Cardiac septum (tissue), 1 donor: ENCODE measurements at regions of chr11 and their contacts with region 1.

Region 1: GRCh38 chr11:8768625-8769333 is 86.2 kb downstream of the RPL27A start:
- DNase-seq: no peak

Region 2: DNA sequence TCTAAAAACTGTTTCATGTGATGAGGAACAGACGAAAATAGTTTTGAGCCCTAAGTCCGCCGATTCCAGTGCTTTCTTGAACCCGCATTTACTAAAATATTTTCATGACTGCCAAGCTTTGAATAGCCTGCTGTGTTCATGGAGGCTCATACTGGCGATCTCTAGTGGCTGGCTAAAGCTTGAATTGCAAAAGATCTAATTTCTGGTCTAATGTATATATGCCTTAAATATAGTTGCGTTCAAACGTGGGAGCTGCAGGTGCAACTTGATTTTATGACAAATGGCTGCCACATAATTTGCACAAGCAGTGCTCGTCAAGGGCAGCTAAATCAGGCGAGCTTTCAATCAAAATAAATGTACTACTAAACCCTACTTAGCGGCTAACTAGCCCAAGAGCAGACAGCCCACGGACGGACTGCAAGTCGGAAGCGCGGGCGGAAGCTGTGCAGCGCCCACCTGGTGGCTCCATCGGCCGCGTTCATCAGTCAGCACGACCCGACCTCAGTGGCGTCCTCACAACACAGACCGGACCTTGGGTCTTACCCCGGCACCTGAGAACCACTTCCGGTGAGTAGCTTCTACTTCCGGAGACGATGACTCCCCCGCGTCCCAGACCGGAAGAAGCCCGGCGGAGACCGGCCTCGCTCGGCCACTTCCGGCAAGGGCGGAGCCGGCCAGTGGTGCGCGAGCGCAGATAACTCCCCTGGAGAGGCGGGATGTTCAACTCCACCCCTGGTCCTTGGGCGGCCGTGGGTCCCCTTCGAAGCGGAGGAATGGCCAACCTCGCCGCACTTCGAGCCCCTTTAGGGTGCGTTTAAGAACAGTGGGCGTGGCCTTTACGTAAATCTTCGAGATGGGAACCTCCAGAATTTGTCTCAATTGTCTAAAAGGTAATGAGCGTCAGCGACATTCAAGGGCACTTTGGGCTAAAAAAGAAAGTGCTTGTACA is 80.1 kb before region 1 on chr11:
- intact Hi-C with region 1: loop called (anchors 5 kb)
- DNase-seq: peak; percentile 97

Region 3: GRCh38 chr11:8717876-8718753 is 50.7 kb before region 1 on chr11:
- intact Hi-C with region 1: loop called (anchors 5 kb)
- DNase-seq: no peak

Region 4: DNA sequence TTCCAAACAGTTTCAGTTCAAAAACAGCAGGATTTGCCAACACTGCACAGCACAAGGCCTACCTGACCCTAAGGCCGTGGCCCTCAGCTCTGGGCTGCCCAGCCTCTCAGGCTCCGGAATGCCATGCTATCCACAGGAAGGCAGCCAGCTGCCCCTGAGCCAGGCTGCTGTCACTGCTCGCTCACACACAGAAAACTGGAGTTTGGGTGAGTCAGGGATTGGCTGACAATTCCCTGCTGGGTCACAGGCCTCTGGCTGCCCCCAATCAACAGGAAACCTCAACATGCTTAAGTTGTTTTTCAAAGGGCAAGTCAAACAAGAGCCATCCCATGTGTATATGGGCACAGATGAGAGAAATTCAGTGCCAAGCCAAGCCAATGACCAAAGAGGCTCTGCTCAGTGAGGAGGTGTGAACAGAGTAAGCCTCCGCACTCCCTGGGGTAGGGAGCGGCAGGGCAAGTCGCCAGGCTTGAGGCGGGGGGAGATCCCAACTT is 36.0 kb before region 1 on chr11:
- intact Hi-C with region 1: loop called (anchors 5 kb)
- DNase-seq: peak; percentile 83

Region 5: GRCh38 chr11:9613830-9614762 is 845.3 kb after region 1 on chr11:
- intact Hi-C with region 1: no loop called
- DNase-seq: peak; percentile 96